B cell (primary cell): ENCODE measurements at regions of chr14 and their contacts with region 1.

Region 1: DNA sequence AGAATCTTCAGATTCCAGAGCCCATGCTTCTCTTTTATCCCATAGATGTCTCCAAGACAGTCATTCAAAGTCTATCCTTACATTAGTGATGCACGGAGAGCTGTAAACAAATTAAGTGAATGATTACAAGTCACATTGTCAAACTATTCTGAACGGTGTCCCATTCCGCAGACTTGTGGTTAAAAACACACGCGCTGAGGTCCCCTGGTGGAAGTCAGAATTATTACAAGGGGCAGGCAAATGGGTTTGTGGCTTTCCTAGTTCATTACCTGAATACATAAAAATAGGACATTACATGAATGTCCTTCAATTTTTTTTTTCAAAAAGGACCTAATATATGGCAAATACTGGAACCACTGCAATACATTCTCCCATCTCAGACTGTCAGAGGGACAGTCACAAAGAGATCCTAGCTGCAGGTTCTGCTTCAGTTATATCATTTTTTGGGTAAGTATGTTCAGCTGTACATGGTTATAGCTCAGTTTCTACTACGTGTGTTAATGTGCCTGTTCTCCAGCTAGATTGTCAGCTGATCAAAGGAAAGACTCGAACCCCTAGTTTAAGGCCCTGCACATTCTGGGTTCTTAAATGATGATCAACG is 53.1 kb upstream of the STON2 start:
- DNase-seq: peak; percentile 59
- ATAC-seq: peak; percentile 76
- H3K4me3 ChIP-seq: no peak overlapping the region
- H3K4me3 Mint-ChIP-seq: no peak overlapping the region
- H3K27ac ChIP-seq: no peak overlapping the region
- H3K27ac Mint-ChIP-seq: no peak overlapping the region
- H3K4me1 ChIP-seq: peaks cover 0 to 3% of the 10 kb centered on the region in 2 donors
- H3K4me1 Mint-ChIP-seq: peaks cover 8% of the 10 kb centered on the region
- H3K27me3 ChIP-seq: peaks cover 0 to 7% (median 0%) of the 10 kb centered on the region in 4 experiments
- H3K27me3 Mint-ChIP-seq: peaks cover 28% of the 10 kb centered on the region
- CTCF ChIP-seq: peak; percentile 93

Region 2: DNA sequence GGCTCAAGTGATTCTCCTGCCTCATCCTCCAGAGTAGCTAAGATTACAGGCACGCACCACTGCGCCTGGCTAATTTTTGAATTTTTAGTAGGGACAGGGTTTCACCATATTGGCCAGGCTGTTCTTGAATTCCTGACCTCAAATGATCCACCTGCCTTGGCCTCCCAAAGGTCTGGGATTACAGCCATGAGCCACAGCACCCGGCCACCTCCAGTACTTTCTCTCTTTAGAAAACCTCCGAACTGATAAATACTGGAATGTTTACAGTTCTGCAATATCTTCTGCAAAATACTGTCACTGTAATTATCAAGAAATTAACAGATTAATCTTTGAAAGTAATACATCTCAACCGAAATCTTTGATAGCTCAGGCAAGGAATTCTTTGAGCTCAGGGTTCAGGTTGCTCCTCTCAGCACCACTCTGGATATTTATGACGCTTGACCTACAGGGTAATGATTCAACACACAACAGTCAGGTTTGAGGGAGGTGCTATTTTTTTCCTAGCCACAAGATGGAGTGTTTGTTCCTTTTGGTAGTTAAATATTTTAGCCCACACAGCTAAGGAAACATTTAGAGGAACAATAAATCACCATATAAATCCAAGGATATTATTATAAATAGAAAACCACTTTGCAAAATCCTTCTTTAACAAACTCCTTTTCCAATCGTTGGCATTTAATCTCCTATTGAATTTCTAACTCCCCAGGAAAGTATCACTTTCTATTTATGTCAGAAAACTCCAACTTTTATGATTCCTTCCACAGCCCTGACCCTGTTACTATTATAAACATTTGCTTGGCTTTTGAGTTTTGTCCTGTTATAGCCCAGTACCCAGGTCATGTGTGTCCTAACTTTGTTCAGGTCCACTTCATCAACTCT is 183.9 kb before region 1 on chr14:
- CTCF ChIA-PET with region 1: interaction called, 32 read pairs
- POLR2A ChIA-PET with region 1: no interaction called
- intact Hi-C with region 1: loop called (anchors 1 kb)
- DNase-seq: peak; percentile 51
- ATAC-seq: no peak
- H3K4me3 ChIP-seq: no peak overlapping the region
- H3K4me3 Mint-ChIP-seq: no peak overlapping the region
- H3K27ac ChIP-seq: no peak overlapping the region
- H3K27ac Mint-ChIP-seq: no peak overlapping the region
- H3K4me1 ChIP-seq: no peaks in the 10 kb centered on the region
- H3K4me1 Mint-ChIP-seq: no peaks in the 10 kb centered on the region
- H3K27me3 ChIP-seq: peaks cover 0 to 12% (median 0%) of the 10 kb centered on the region in 4 experiments
- H3K27me3 Mint-ChIP-seq: peaks cover 34% of the 10 kb centered on the region
- CTCF ChIP-seq: peak; percentile 78

Region 3: DNA sequence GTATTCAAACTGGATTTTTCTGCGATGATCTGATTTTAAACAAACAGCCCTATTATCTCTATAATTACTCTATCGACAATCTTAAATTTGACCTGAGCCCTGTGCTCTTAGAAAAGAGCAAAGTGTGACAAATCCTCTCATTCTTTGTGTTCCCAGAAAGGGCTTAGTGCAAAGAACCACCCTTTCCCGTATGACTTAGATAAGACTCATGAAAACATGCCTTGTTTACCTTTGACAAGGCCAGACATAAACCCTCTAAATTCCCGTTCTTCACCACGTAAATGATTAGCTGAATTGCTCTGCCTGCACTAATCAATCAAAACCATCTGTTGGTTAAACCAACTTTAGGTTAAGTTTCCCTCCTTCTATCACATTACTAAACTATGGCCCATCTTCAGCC is 366.1 kb after region 1 on chr14:
- CTCF ChIA-PET with region 1: no interaction called
- POLR2A ChIA-PET with region 1: no interaction called
- intact Hi-C with region 1: no loop called
- DNase-seq: no peak
- ATAC-seq: no peak
- H3K4me3 ChIP-seq: no peak overlapping the region
- H3K4me3 Mint-ChIP-seq: no peak overlapping the region
- H3K27ac ChIP-seq: no peak overlapping the region
- H3K27ac Mint-ChIP-seq: no peak overlapping the region
- H3K4me1 ChIP-seq: no peaks in the 10 kb centered on the region
- H3K4me1 Mint-ChIP-seq: no peaks in the 10 kb centered on the region
- H3K27me3 ChIP-seq: no peaks in the 10 kb centered on the region
- H3K27me3 Mint-ChIP-seq: no peaks in the 10 kb centered on the region
- CTCF ChIP-seq: no peak